Endothelial cell of umbilical vein (primary cell): ENCODE measurements at regions of chr22 and their contacts with region 1.

Region 1: GRCh38 chr22:40276996-40277823 is 69.1 kb upstream of the ADSL start:
- DNase-seq: peak; percentile 76
- H3K4me3 ChIP-seq: peak overlapping the region in 2 of 3 experiments; percentile 41 to 76
- H3K27ac ChIP-seq: peak overlapping the region; percentile 58
- H3K4me1 ChIP-seq: peaks cover 33% of the 10 kb centered on the region
- H3K27me3 ChIP-seq: no peaks in the 10 kb centered on the region
- CTCF ChIP-seq: no peak
- POLR2A ChIP-seq: no peak

Region 2: GRCh38 chr22:40044102-40044869 is 232.9 kb before region 1 on chr22:
- CTCF ChIA-PET with region 1: no interaction called
- POLR2A ChIA-PET with region 1: interaction called, 3 read pairs
- dilution Hi-C with region 1: no loop called
- intact Hi-C with region 1: loop called (anchors 10 kb)
- DNase-seq: peak; percentile 99
- H3K4me3 ChIP-seq: peak overlapping the region; percentile 48 to 95 (median 68)
- H3K27ac ChIP-seq: peak overlapping the region; percentile 87
- H3K4me1 ChIP-seq: peaks cover 19% of the 10 kb centered on the region
- H3K27me3 ChIP-seq: peaks cover 0 to 16% of the 10 kb centered on the region in 2 experiments
- CTCF ChIP-seq: no peak
- POLR2A ChIP-seq: no peak

Region 3: DNA sequence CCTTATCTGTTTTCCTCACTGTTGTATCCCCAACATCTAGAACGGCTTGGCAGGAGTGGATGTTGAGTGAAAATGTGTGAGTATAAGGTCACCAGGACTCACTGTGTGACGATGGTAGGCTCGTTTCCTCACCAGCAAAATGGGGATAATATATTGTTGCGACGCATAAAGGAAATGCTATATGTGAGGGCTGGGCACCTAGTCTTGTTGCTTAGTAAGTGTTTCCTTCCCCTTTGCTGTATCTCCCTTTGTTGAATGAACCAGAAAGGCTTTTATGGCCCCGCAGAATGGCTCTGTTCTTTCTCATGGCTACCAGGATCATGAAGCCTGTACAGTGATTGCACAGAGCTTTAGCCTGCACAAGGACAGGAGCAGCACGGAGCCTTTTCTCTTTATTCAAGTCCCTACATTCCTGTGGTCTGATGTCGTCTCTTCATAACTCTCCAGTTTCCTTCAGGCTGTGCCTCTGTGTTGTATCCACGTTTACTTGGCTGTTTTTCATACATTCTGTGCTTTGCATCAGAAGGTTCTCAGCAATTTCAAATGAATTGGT is 94.1 kb before region 1 on chr22:
- CTCF ChIA-PET with region 1: no interaction called
- POLR2A ChIA-PET with region 1: interaction called, 4 read pairs
- dilution Hi-C with region 1: no loop called
- intact Hi-C with region 1: loop called (anchors 1 kb)
- DNase-seq: peak; percentile 92
- H3K4me3 ChIP-seq: peak overlapping the region in 1 of 3 experiments; percentile 41
- H3K27ac ChIP-seq: peak overlapping the region; percentile 89
- H3K4me1 ChIP-seq: peaks cover 42% of the 10 kb centered on the region
- H3K27me3 ChIP-seq: no peaks in the 10 kb centered on the region
- CTCF ChIP-seq: no peak
- POLR2A ChIP-seq: no peak

Region 4: DNA sequence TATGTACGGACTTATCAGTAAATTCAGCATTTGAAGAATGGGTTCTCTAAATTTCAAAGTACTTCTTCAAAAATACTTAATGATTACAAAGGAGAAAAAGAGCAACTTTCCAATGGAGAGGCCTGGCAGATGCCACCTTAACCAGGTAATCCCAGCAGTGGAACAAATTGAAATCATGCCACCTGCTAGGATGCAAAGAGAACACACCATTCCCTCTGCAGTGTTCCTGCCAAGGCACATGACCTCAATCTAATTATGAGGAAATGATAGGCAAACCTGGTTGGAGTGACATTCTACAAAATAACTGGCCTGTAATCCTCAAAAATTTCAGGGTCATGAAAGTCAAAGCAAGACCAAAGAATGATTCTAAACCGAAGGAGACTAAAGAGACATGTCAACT is 78.0 kb before region 1 on chr22:
- CTCF ChIA-PET with region 1: no interaction called
- POLR2A ChIA-PET with region 1: no interaction called
- dilution Hi-C with region 1: no loop called
- intact Hi-C with region 1: no loop called
- DNase-seq: no peak
- H3K4me3 ChIP-seq: no peak overlapping the region
- H3K27ac ChIP-seq: no peak overlapping the region
- H3K4me1 ChIP-seq: peaks cover 10% of the 10 kb centered on the region
- H3K27me3 ChIP-seq: no peaks in the 10 kb centered on the region
- CTCF ChIP-seq: no peak
- POLR2A ChIP-seq: no peak

Region 5: GRCh38 chr22:40210818-40211217 is 66.4 kb before region 1 on chr22:
- CTCF ChIA-PET with region 1: interaction called, 6 read pairs
- POLR2A ChIA-PET with region 1: no interaction called
- dilution Hi-C with region 1: no loop called
- intact Hi-C with region 1: loop called (anchors 5 kb)
- DNase-seq: no peak
- H3K4me3 ChIP-seq: no peak overlapping the region
- H3K27ac ChIP-seq: no peak overlapping the region
- H3K4me1 ChIP-seq: peaks cover 24% of the 10 kb centered on the region
- H3K27me3 ChIP-seq: no peaks in the 10 kb centered on the region
- CTCF ChIP-seq: no peak
- POLR2A ChIP-seq: no peak

Region 6: DNA sequence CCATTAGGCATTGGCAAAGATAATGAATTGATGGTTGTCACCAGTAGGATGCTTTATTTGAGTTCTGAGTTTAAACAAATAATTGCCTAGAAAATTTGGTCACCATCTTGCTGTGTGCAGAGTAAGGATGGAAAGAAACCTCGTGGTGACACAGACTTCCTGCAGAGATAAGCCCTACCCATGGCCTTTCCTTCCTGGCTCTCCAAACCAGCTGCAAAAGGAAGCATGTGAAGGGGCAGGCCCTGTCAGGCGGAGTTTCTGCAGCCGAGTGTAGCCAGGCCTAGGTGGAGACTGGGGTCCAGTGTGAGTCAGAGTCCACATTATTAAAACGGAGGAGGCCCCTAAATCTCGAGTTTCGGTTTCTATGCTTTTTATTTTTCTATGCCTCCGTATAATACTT is 14.0 kb before region 1 on chr22:
- CTCF ChIA-PET with region 1: interaction called, 6 read pairs
- POLR2A ChIA-PET with region 1: no interaction called
- dilution Hi-C with region 1: no loop called
- intact Hi-C with region 1: loop called (anchors 2 kb)
- DNase-seq: peak; percentile 80
- H3K4me3 ChIP-seq: no peak overlapping the region
- H3K27ac ChIP-seq: peak overlapping the region; percentile 23
- H3K4me1 ChIP-seq: peaks cover 41% of the 10 kb centered on the region
- H3K27me3 ChIP-seq: no peaks in the 10 kb centered on the region
- CTCF ChIP-seq: no peak
- POLR2A ChIP-seq: no peak